ENCODE measurements at regions of chrX and their contacts with region 1.

Region 1: GRCh38 chrX:15299941-15300851 is 15.2 kb downstream of the ASB11 start:
- DNase-seq: no peak
- ATAC-seq: no peak
- H3K4me3 ChIP-seq: peak overlapping the region in 3 of 12 donors; percentile 3 to 13 (median 6)
- H3K27ac ChIP-seq: peak overlapping the region in 10 of 12 donors; percentile 38 to 82 (median 79)
- H3K4me1 ChIP-seq: peaks cover 0 to 39% (median 14%) of the 10 kb centered on the region in 12 donors
- H3K27me3 ChIP-seq: no peaks in the 10 kb centered on the region
- CTCF ChIP-seq: peak; percentile 17 to 58 (median 42)
- POLR2A ChIP-seq: no peak

Region 2: GRCh38 chrX:15335135-15336022 is 35.2 kb after region 1 on chrX and contains the start of gene PIGA:
- intact Hi-C with region 1: loop called in 2 of 10 experiments (anchors 5 kb)
- DNase-seq: peak; percentile 93 to 97 (median 96)
- ATAC-seq: peak; percentile 98 to 99 (median 98)
- H3K4me3 ChIP-seq: peak within 1 kb of the TSS; percentile 54 to 96 (median 80)
- H3K27ac ChIP-seq: peak within 1 kb of the TSS in 11 of 12 donors; percentile 78 to 90 (median 83)
- H3K4me1 ChIP-seq: peaks cover 0 to 17% (median 6%) of the 10 kb centered on the region in 12 donors
- H3K27me3 ChIP-seq: peaks cover 0 to 12% (median 0%) of the 10 kb centered on the region in 9 donors
- CTCF ChIP-seq: no peak
- POLR2A ChIP-seq: peak; percentile 68 to 88
- total RNA-seq, gene PIGA: 1.6 to 7.4 (median 4.5) TPM

Region 3: DNA sequence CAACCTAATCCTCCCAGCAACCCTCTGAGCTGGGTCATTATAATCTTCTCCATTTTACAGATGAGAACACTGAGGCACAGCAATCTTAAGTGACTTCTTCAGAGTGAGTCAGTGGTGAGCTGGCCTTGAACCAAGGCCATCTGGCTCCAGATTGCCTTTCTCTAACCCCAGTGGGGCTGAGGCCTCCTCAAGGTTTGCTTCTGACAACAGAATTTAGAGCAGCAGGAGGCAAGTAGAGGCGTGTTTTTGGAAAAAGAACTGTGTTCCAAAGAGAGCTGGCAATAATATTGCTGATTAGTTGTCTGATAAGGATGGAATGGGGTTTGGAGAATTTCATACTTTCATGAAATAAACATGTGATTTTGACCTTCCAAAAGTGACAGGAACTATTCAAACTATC is 151.7 kb after region 1 on chrX:
- intact Hi-C with region 1: no loop called
- DNase-seq: peak in 3 of 5 donors; percentile 21 to 47 (median 44)
- ATAC-seq: peak in 2 of 4 donors; percentile 24 to 81
- H3K4me3 ChIP-seq: no peak overlapping the region
- H3K27ac ChIP-seq: no peak overlapping the region
- H3K4me1 ChIP-seq: peaks cover 0 to 7% (median 0%) of the 10 kb centered on the region in 12 donors
- H3K27me3 ChIP-seq: peaks cover 0 to 44% (median 0%) of the 10 kb centered on the region in 9 donors
- CTCF ChIP-seq: no peak
- POLR2A ChIP-seq: no peak

Region 4: DNA sequence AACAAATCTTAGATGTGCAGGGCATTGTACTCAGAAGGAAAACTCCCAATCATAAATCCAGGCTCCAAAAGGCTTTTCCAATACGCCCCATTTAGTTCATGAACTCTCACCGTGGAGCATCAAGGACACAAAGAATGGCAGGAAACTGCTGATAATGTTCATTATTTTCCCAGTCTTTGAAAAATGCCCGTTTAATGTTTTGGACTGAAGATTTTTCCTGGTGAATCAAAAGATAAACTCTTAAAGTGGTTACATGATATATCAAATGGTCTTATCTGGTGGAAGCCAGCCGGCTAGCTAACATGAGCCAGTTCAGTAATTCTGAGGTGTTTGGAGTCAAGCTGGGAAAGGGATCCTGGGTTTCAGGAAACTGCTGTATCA is 616.5 kb after region 1 on chrX:
- intact Hi-C with region 1: no loop called
- DNase-seq: no peak
- ATAC-seq: peak in 2 of 4 donors; percentile 12 to 34
- H3K4me3 ChIP-seq: no peak overlapping the region
- H3K27ac ChIP-seq: peak overlapping the region in 3 of 12 donors; percentile 9 to 51 (median 22)
- H3K4me1 ChIP-seq: peaks cover 0 to 25% (median 0%) of the 10 kb centered on the region in 12 donors
- H3K27me3 ChIP-seq: peaks cover 0 to 30% (median 0%) of the 10 kb centered on the region in 9 donors
- CTCF ChIP-seq: no peak
- POLR2A ChIP-seq: no peak